ENCODE measurements at regions of chr5 and their contacts with region 1.

Region 1: GRCh38 chr5:74772359-74772758 is 5.3 kb downstream of the NSA2 start:
- DNase-seq: no peak
- H3K4me3 ChIP-seq: no peak overlapping the region
- H3K27ac ChIP-seq: no peak overlapping the region
- H3K4me1 ChIP-seq: peaks cover 6% of the 10 kb centered on the region
- H3K27me3 ChIP-seq: no peaks in the 10 kb centered on the region
- CTCF ChIP-seq: no peak

Region 2: DNA sequence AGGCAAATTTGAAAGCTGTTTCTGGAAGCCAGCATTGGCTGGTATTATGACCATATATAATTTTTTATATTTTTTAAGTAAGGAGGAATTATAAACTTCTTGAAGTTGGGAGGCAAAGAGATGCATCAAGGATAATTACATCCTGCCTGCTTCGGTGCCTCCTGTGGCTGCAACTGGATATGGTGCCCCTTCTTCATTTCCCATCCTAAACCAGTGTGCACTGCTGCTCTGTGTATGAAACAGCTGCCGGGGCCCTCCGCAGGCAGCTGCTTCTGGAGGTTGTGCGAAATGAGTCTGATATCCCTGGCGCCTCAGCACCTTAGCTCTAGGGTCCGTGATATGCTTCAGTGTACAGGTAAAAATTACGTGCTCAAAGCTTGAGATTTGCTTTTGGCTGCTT is 436.1 kb before region 1 on chr5:
- CTCF ChIA-PET with region 1: no interaction called
- POLR2A ChIA-PET with region 1: no interaction called
- intact Hi-C with region 1: no loop called
- DNase-seq: no peak
- H3K4me3 ChIP-seq: no peak overlapping the region
- H3K27ac ChIP-seq: no peak overlapping the region
- H3K4me1 ChIP-seq: peaks cover 7% of the 10 kb centered on the region
- H3K27me3 ChIP-seq: no peaks in the 10 kb centered on the region
- CTCF ChIP-seq: no peak

Region 3: GRCh38 chr5:74499256-74500050 is 272.9 kb before region 1 on chr5:
- CTCF ChIA-PET with region 1: interaction called, 10 read pairs
- POLR2A ChIA-PET with region 1: no interaction called
- intact Hi-C with region 1: no loop called
- DNase-seq: no peak
- H3K4me3 ChIP-seq: no peak overlapping the region
- H3K27ac ChIP-seq: no peak overlapping the region
- H3K4me1 ChIP-seq: no peaks in the 10 kb centered on the region
- H3K27me3 ChIP-seq: no peaks in the 10 kb centered on the region
- CTCF ChIP-seq: no peak

Region 4: DNA sequence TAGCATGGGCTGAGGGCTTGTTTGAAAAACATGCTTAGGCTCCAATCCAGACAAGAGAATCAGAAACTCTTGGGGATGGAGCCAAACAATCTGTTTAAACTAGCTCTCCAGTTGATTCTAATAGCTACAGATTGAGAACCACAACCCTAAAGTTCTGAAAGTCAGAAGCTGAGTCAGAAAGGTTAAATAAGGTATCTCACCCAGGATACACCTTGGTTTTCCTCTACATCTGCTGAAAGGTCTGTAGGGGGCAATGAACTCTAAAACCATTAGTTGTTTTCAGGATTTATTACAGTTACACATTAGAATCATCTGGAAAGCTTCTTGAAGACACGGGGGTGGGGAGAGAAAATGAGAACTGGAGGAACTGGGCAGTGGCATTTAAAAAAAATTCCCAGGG is 11.1 kb before region 1 on chr5:
- CTCF ChIA-PET with region 1: no interaction called
- POLR2A ChIA-PET with region 1: interaction called, 10 read pairs
- intact Hi-C with region 1: no loop called
- DNase-seq: no peak
- H3K4me3 ChIP-seq: no peak overlapping the region
- H3K27ac ChIP-seq: peak overlapping the region; percentile 90; the same call in 1 of the 2 replicates
- H3K4me1 ChIP-seq: peaks cover 47% of the 10 kb centered on the region
- H3K27me3 ChIP-seq: no peaks in the 10 kb centered on the region
- CTCF ChIP-seq: no peak